CD4-positive, alpha-beta memory T cell (primary cell): ENCODE measurements at regions of chr13 and their contacts with region 1.

Region 1: DNA sequence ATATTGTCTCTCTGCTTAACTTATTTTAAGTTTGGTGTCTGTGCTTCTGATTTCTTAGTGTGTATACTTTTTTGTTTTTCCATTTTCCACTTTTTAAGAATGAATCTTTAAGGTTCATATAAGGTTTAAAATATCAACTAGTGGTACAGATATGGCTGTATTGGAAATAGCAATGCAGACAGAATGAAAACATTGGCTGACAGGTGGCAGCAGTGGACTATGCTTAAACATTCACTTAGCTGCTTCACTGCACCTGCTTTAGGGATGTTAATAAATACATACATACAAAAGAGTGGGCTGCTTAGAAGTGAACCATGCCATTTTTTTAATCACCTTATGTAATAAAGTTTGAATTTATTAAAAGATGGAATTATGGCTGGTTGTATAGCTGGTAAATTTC is 27.3 kb downstream of the TM9SF2 start:
- DNase-seq: peak in 4 of 5 donors; percentile 40 to 47 (median 42)
- H3K4me3 ChIP-seq: no peak overlapping the region
- H3K4me3 Mint-ChIP-seq: no peak overlapping the region
- H3K27ac ChIP-seq: no peak overlapping the region
- H3K27ac Mint-ChIP-seq: peak overlapping the region in 1 of 7 donors; percentile 53
- H3K4me1 ChIP-seq: peaks cover 21% of the 10 kb centered on the region
- H3K4me1 Mint-ChIP-seq: peaks cover 39 to 61% (median 45%) of the 10 kb centered on the region in 4 donors
- H3K27me3 ChIP-seq: no peaks in the 10 kb centered on the region
- H3K27me3 Mint-ChIP-seq: no peaks in the 10 kb centered on the region

Region 2: GRCh38 chr13:99288089-99288488 is 240.5 kb before region 1 on chr13:
- CTCF ChIA-PET with region 1: no interaction called
- POLR2A ChIA-PET with region 1: no interaction called
- intact Hi-C with region 1: no loop called
- DNase-seq: no peak
- H3K4me3 ChIP-seq: no peak overlapping the region
- H3K4me3 Mint-ChIP-seq: peak overlapping the region; percentile 33 to 84 (median 60)
- H3K27ac ChIP-seq: peak overlapping the region; percentile 18
- H3K27ac Mint-ChIP-seq: peak overlapping the region; percentile 88 to 95 (median 89)
- H3K4me1 ChIP-seq: peaks cover 95% of the 10 kb centered on the region
- H3K4me1 Mint-ChIP-seq: peaks cover 65 to 100% (median 81%) of the 10 kb centered on the region in 4 donors
- H3K27me3 ChIP-seq: no peaks in the 10 kb centered on the region
- H3K27me3 Mint-ChIP-seq: no peaks in the 10 kb centered on the region

Region 3: DNA sequence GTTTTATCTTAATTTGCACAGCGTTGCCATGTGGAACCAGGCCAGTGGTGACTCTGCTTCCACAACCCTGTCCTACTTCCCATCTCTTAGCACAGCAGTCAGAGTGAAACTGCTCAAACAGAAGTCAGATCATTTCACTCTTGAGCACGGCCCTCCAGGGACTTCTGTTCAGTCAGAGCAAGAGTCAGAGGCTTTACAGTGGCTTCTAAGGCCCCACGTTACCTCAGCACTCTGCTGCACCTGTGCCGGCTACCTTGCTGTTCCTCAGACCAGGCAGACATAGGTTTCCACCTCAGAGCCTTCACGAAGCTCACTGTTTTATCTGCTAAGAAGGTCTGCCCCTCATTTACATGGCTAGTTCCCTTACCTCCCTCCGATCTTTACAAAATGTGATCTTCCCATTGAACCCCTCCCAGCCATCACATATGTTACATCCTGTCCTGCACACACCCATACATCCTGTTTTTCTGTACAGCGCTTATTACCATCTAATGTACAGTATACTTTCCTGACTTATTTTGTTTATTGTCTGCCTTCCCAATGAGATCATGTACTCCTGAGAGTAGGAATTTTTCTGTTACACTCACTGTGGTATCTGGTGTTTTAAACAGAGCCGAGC is 14.3 kb after region 1 on chr13:
- CTCF ChIA-PET with region 1: interaction called, 24 read pairs
- POLR2A ChIA-PET with region 1: interaction called, 6 read pairs
- intact Hi-C with region 1: no loop called
- DNase-seq: peak; percentile 26 to 46 (median 42)
- H3K4me3 ChIP-seq: peak overlapping the region; percentile 12 to 47
- H3K4me3 Mint-ChIP-seq: peak overlapping the region; percentile 43 to 78 (median 72)
- H3K27ac ChIP-seq: peak overlapping the region; percentile 31
- H3K27ac Mint-ChIP-seq: peak overlapping the region; percentile 36 to 92 (median 78)
- H3K4me1 ChIP-seq: peaks cover 71% of the 10 kb centered on the region
- H3K4me1 Mint-ChIP-seq: peaks cover 38 to 73% (median 53%) of the 10 kb centered on the region in 4 donors
- H3K27me3 ChIP-seq: no peaks in the 10 kb centered on the region
- H3K27me3 Mint-ChIP-seq: no peaks in the 10 kb centered on the region

Region 4: GRCh38 chr13:99606324-99607066 is 77.9 kb after region 1 on chr13:
- CTCF ChIA-PET with region 1: interaction called, 30 read pairs
- POLR2A ChIA-PET with region 1: interaction called, 4 read pairs
- intact Hi-C with region 1: no loop called
- DNase-seq: peak; percentile 87 to 90 (median 89)
- H3K4me3 ChIP-seq: peak within 1 kb of the TSS; percentile 53 to 78
- H3K4me3 Mint-ChIP-seq: peak within 1 kb of the TSS; percentile 88 to 97 (median 90)
- H3K27ac ChIP-seq: peak within 1 kb of the TSS; percentile 71
- H3K27ac Mint-ChIP-seq: peak within 1 kb of the TSS; percentile 91 to 96 (median 95)
- H3K4me1 ChIP-seq: peaks cover 35% of the 10 kb centered on the region
- H3K4me1 Mint-ChIP-seq: peaks cover 28 to 59% (median 46%) of the 10 kb centered on the region in 4 donors
- H3K27me3 ChIP-seq: no peaks in the 10 kb centered on the region
- H3K27me3 Mint-ChIP-seq: no peaks in the 10 kb centered on the region

Region 5: GRCh38 chr13:99916366-99917103 is 388.0 kb after region 1 on chr13:
- CTCF ChIA-PET with region 1: interaction called, 4 read pairs
- POLR2A ChIA-PET with region 1: no interaction called
- intact Hi-C with region 1: loop called (anchors 1 kb)
- DNase-seq: peak; percentile 45 to 52 (median 49)
- H3K4me3 ChIP-seq: no peak overlapping the region
- H3K4me3 Mint-ChIP-seq: no peak overlapping the region
- H3K27ac ChIP-seq: no peak overlapping the region
- H3K27ac Mint-ChIP-seq: no peak overlapping the region
- H3K4me1 ChIP-seq: peaks cover 24% of the 10 kb centered on the region
- H3K4me1 Mint-ChIP-seq: peaks cover 12 to 21% (median 18%) of the 10 kb centered on the region in 4 donors
- H3K27me3 ChIP-seq: no peaks in the 10 kb centered on the region
- H3K27me3 Mint-ChIP-seq: peaks cover 0 to 2% of the 10 kb centered on the region in 2 donors

Region 6: GRCh38 chr13:100514788-100515409 is 986.4 kb after region 1 on chr13:
- CTCF ChIA-PET with region 1: interaction called, 5 read pairs
- POLR2A ChIA-PET with region 1: no interaction called
- intact Hi-C with region 1: loop called (anchors 1 kb)
- DNase-seq: peak; percentile 63 to 71 (median 67)
- H3K4me3 ChIP-seq: no peak overlapping the region
- H3K4me3 Mint-ChIP-seq: no peak overlapping the region
- H3K27ac ChIP-seq: no peak overlapping the region
- H3K27ac Mint-ChIP-seq: no peak overlapping the region
- H3K4me1 ChIP-seq: peaks cover 20% of the 10 kb centered on the region
- H3K4me1 Mint-ChIP-seq: peaks cover 9 to 21% (median 18%) of the 10 kb centered on the region in 4 donors
- H3K27me3 ChIP-seq: no peaks in the 10 kb centered on the region
- H3K27me3 Mint-ChIP-seq: no peaks in the 10 kb centered on the region